ENCODE measurements at regions of chr9 and their contacts with region 1.

Region 1: DNA sequence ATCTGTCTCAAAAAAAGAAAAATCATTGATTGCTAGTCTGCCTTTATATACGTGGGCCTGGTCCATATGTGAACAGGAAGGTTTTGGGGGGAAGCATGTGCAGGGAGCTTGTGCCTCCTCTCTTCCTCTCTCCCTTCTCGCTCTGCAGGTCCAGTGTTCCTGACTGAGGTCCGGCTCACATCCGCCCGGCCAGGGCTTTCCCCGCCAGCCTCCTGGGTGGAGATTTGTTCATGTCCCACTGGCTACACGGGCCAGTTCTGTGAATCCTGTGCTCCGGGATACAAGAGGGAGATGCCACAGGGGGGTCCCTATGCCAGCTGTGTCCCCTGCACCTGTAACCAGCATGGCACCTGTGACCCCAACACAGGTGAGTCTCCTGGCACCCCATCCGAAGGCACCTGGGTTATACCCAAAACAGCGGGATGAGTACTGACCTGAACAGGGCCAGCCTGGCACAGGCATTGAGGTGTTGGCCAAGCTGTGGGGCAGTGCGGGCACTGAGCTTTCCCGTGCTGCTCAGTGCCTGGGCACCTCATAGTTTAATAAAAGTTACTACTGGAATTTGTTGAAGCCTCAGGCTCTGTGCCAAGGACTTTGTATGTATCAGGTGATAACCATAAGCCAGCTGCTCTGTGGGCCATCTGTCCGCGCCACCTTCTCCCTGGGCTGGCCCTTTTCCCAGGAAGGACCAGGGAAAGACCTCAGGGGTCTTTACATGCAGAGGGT is 39.4 kb upstream of the AIF1L start:
- DNase-seq: no peak
- ATAC-seq: no peak
- H3K4me3 ChIP-seq: no peak overlapping the region
- H3K27ac ChIP-seq: no peak overlapping the region
- H3K4me1 ChIP-seq: no peaks in the 10 kb centered on the region
- H3K27me3 ChIP-seq: no peaks in the 10 kb centered on the region

Region 2: GRCh38 chr9:131125128-131126058 is 68.4 kb after region 1 on chr9 and contains the start of gene NUP214:
- intact Hi-C with region 1: loop called in 1 of 2 experiments (anchors 5 kb)
- DNase-seq: peak; percentile 99 to 100
- ATAC-seq: peak; percentile 100
- H3K4me3 ChIP-seq: peak within 1 kb of the TSS; percentile 64 to 72
- H3K27ac ChIP-seq: peak within 1 kb of the TSS in 1 of 2 donors; percentile 58
- H3K4me1 ChIP-seq: no peaks in the 10 kb centered on the region
- H3K27me3 ChIP-seq: no peaks in the 10 kb centered on the region
- total RNA-seq, gene NUP214: 53.2 to 63.6 TPM